Left colon (tissue), 2 donors: ENCODE measurements at regions of chr3 and their contacts with region 1.

Region 1: GRCh38 chr3:135918580-135918962 is 47.0 kb upstream of the PPP2R3A start:
- DNase-seq: no peak
- ATAC-seq: peak; percentile 73

Region 2: DNA sequence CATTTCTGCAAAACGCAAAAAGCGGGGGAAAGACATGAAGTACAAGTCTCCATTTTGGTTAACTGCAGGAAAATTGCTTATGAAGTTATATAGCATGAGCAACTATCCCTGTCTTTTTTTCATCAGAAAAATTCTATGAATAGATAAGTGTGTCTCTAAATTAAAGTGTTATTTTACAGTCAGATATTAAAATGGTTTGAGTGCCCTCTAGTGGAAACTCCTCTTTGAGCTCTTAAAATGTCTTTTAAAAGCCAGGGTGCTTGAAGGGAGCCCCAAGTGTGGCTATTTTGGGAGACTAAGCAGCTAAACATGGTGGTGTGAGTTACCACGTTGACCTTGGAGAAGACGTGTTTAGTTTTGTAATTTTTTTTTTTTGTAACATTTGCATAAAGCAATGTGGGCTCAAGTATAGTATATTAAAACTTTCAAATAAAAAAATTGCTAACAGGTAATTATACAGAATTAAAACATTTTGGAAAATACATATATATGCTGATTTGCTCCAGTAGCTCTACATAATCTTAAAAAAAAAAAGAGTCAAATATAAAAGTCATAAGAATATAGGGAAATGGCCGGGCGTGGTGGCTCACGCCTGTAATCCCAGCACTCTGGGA is 124.1 kb after region 1 on chr3:
- intact Hi-C with region 1: loop called in 1 of 2 experiments (anchors 5 kb)
- DNase-seq: no peak
- ATAC-seq: peak; percentile 45